SK-N-SH (cell line): ENCODE measurements at regions of chr15 and their contacts with region 1.

Region 1: GRCh38 chr15:40746916-40747514 is 8.0 kb downstream of the RMDN3 start:
- DNase-seq: peak; percentile 31
- H3K4me3 ChIP-seq: no peak overlapping the region
- H3K27ac ChIP-seq: peak overlapping the region in 1 of 2 experiments; percentile 51; a peak in 1 of 4 replicates
- H3K4me1 ChIP-seq: peaks cover 0 to 4% of the 10 kb centered on the region in 2 experiments; a peak in 1 of 4 replicates
- H3K27me3 ChIP-seq: no peaks in the 10 kb centered on the region
- CTCF ChIP-seq: no peak
- EP300 ChIP-seq: no peak
- RAD21 ChIP-seq: no peak

Region 2: GRCh38 chr15:40407330-40407990 is 339.6 kb before region 1 on chr15:
- CTCF ChIA-PET with region 1: no interaction called
- POLR2A ChIA-PET with region 1: no interaction called
- DNase-seq: no peak
- H3K4me3 ChIP-seq: peak overlapping the region in 1 of 2 experiments; percentile 99; a peak in 1 of 4 replicates
- H3K27ac ChIP-seq: no peak overlapping the region
- H3K4me1 ChIP-seq: peaks cover 9 to 13% of the 10 kb centered on the region in 2 experiments; a peak in 1 of 4 replicates
- H3K27me3 ChIP-seq: no peaks in the 10 kb centered on the region
- CTCF ChIP-seq: no peak
- EP300 ChIP-seq: no peak
- RAD21 ChIP-seq: no peak

Region 3: GRCh38 chr15:40731034-40731433 is 16.0 kb before region 1 on chr15:
- CTCF ChIA-PET with region 1: interaction called, 28 read pairs
- POLR2A ChIA-PET with region 1: no interaction called
- DNase-seq: no peak
- H3K4me3 ChIP-seq: no peak overlapping the region
- H3K27ac ChIP-seq: no peak overlapping the region
- H3K4me1 ChIP-seq: no peaks in the 10 kb centered on the region; a peak in 1 of 4 replicates
- H3K27me3 ChIP-seq: no peaks in the 10 kb centered on the region
- CTCF ChIP-seq: no peak
- EP300 ChIP-seq: no peak
- RAD21 ChIP-seq: no peak

Region 4: GRCh38 chr15:40814901-40815670 is 68.1 kb after region 1 on chr15:
- CTCF ChIA-PET with region 1: interaction called, 10 read pairs
- POLR2A ChIA-PET with region 1: no interaction called
- DNase-seq: no peak
- H3K4me3 ChIP-seq: no peak overlapping the region
- H3K27ac ChIP-seq: 0 out of 4 replicates have a peak overlapping the region, but pooled peaks of 1 of the 2 experiments have one; percentile 13
- H3K4me1 ChIP-seq: peaks cover 0 to 5% of the 10 kb centered on the region in 2 experiments; a peak in 1 of 4 replicates
- H3K27me3 ChIP-seq: no peaks in the 10 kb centered on the region
- CTCF ChIP-seq: no peak
- EP300 ChIP-seq: no peak
- RAD21 ChIP-seq: no peak

Region 5: DNA sequence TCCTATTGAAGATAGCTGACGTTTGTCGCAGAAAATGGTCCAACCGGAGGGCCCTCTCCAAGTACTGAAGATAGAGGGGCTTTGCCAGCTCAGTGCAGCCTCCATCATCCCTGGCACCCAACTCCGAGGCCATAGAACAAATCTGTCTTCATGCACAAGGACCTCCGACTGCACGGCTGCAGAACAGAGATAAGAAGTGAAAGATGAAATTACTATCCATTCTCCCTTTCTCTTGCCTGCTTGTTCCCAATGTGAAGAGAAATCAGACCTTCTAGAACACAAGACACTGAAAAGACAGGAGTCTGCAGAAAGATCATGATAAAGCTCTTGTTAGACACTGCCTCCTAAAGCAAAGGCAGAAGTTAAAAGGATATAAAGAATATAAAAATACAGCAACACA is 349.2 kb after region 1 on chr15:
- CTCF ChIA-PET with region 1: no interaction called
- POLR2A ChIA-PET with region 1: no interaction called
- DNase-seq: no peak
- H3K4me3 ChIP-seq: no peak overlapping the region
- H3K27ac ChIP-seq: no peak overlapping the region
- H3K4me1 ChIP-seq: no peaks in the 10 kb centered on the region
- H3K27me3 ChIP-seq: no peaks in the 10 kb centered on the region
- CTCF ChIP-seq: no peak
- EP300 ChIP-seq: no peak
- RAD21 ChIP-seq: no peak